ENCODE measurements at regions of chr19 and their contacts with region 1.

Region 1: DNA sequence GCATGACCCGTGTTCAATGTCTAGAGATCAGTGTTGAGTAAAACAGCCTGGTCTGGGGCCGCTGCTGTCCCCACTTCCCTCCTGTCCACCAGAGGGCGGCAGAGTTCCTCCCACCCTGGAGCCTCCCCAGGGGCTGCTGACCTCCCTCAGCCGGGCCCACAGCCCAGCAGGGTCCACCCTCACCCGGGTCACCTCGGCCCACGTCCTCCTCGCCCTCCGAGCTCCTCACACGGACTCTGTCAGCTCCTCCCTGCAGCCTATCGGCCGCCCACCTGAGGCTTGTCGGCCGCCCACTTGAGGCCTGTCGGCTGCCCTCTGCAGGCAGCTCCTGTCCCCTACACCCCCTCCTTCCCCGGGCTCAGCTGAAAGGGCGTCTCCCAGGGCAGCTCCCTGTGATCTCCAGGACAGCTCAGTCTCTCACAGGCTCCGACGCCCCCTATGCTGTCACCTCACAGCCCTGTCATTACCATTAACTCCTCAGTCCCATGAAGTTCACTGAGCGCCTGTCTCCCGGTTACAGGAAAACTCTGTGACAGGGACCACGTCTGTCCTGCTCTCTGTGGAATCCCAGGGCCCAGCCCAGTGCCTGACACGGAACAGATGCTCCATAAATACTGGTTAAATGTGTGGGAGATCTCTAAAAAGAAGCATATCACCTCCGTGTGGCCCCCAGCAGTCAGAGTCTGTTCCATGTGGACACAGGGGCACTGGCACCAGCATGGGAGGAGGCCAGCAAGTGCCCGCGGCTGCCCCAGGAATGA is 1.5 kb upstream of the CEACAM5 start:
- DNase-seq: peak; percentile 76
- ATAC-seq: peak; percentile 96
- H3K4me3 Mint-ChIP-seq: peak overlapping the region; percentile 47
- H3K27ac Mint-ChIP-seq: no peak overlapping the region
- H3K4me1 Mint-ChIP-seq: peaks cover 2% of the 10 kb centered on the region
- H3K27me3 Mint-ChIP-seq: peaks cover 9% of the 10 kb centered on the region

Region 2: GRCh38 chr19:41691268-41691970 is 15.5 kb before region 1 on chr19:
- CTCF ChIA-PET with region 1: interaction called, 23 read pairs
- POLR2A ChIA-PET with region 1: no interaction called
- DNase-seq: peak; percentile 41
- ATAC-seq: peak; percentile 27
- H3K4me3 Mint-ChIP-seq: no peak overlapping the region
- H3K27ac Mint-ChIP-seq: no peak overlapping the region
- H3K4me1 Mint-ChIP-seq: no peaks in the 10 kb centered on the region
- H3K27me3 Mint-ChIP-seq: peaks cover 9% of the 10 kb centered on the region

Region 3: DNA sequence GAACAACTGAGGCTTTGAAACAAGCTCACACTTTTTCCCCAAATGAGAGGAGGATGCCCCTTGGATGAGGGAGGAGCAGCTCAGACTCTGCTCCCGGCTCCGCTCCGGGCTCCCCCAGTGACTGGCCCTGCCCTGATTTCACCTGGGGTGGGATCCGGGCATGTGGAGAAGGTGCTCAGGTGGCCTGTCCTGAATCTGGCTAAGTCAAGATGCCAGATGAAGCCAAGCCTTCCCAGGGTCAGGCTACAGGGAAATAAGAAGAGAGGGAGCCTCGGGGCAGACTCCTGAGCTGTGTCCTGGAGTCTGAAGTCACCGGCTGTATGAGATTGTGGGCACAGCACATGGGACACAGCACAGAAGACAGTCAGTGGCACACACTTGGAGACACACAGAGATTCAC is 11.8 kb after region 1 on chr19:
- CTCF ChIA-PET with region 1: interaction called, 26 read pairs
- POLR2A ChIA-PET with region 1: no interaction called
- DNase-seq: no peak
- ATAC-seq: no peak
- H3K4me3 Mint-ChIP-seq: no peak overlapping the region
- H3K27ac Mint-ChIP-seq: no peak overlapping the region
- H3K4me1 Mint-ChIP-seq: no peaks in the 10 kb centered on the region
- H3K27me3 Mint-ChIP-seq: peaks cover 5% of the 10 kb centered on the region

Region 4: DNA sequence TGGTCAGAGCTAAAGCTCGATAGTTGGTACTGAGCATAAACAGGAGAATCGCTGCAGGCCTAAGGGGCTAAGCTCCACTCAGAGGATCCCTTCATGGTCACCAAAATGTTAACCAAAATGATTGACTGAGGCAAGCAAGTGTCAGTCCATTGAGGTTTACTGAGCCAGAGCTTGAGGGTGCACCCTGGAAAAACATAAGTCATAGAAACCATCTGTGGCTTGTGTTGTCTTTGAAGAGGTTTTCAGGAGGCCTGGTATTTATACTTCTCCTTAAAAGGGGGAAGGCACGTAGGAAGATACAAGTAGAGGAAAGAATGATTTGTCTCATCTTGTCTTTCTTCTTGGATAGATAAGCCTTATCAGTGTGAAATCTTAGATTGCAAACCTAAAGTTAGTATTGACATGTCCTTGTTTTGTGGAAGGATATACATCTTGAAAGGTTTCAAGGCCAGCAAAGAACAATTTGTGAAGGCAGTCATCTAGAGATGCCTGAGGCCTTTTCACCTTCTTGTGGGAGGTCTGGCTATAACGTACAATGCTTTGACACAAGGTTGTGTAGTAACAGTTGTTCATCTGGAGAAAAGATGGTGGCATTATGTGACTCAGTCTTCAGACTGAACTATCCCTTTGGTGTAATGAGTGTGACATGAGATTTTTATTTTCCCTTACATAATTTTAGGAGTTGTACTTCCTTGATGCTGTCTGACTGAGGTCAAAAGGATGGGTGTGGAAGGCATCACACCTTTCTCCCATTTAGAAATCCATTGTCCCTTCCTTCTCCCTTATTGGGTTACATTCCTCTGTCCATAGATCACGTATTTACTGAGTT is 33.7 kb after region 1 on chr19:
- CTCF ChIA-PET with region 1: interaction called, 22 read pairs
- POLR2A ChIA-PET with region 1: no interaction called
- DNase-seq: no peak
- ATAC-seq: peak; percentile 51
- H3K4me3 Mint-ChIP-seq: no peak overlapping the region
- H3K27ac Mint-ChIP-seq: no peak overlapping the region
- H3K4me1 Mint-ChIP-seq: peaks cover 21% of the 10 kb centered on the region
- H3K27me3 Mint-ChIP-seq: peaks cover 43% of the 10 kb centered on the region

Region 5: DNA sequence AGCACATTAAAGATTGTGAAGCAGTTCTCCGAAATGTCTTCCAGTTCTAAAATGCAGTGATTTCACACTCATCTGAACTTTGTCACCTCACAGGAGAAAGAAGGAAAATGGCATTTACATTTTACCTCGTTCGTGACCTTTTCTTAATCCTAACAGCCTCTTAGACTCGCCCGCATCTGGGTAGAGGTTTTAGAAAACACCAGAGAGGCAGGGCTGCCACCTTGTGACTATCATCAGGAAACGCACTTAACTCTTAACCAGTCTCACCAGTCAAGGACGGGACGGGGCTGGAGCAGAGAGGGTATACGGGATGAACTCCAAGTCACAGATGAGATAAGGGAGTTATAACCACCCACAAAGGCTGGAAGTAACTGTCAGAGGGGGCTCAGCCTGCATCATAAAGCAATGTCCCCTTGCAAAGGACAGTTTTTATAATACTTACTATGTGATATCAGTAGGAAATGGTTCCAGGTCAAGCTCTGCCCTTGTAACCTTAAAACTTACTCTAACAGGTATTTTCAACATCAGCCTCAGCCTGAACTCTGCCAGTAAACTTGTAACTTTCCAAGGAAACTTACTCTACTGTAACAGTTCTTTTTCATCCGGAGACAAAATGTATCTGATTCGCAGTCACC is 39.8 kb after region 1 on chr19:
- CTCF ChIA-PET with region 1: interaction called, 22 read pairs
- POLR2A ChIA-PET with region 1: no interaction called
- DNase-seq: peak; percentile 70
- ATAC-seq: peak; percentile 84
- H3K4me3 Mint-ChIP-seq: no peak overlapping the region
- H3K27ac Mint-ChIP-seq: no peak overlapping the region
- H3K4me1 Mint-ChIP-seq: peaks cover 9% of the 10 kb centered on the region
- H3K27me3 Mint-ChIP-seq: peaks cover 47% of the 10 kb centered on the region

Region 6: DNA sequence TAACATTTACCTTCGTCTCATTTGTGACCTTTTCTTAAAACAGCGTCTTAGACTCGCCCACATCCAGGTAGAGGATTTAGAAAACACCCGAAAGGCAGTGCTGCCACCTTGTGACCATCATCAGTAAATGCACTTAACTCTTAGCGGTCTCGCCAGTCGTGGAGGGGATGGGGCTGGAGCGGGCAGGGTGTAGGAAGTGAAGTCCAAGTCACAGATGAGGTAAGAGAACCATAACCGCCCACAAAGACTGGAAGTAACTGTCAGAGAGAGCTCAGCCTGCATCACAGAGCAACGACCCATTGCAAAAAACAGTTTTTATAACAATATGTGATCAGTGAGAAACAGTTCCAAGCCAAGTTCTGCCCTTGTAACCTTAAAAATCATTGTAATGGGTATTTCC is 78.7 kb after region 1 on chr19:
- CTCF ChIA-PET with region 1: interaction called, 21 read pairs
- POLR2A ChIA-PET with region 1: no interaction called
- DNase-seq: peak; percentile 85
- ATAC-seq: peak; percentile 93
- H3K4me3 Mint-ChIP-seq: no peak overlapping the region
- H3K27ac Mint-ChIP-seq: no peak overlapping the region
- H3K4me1 Mint-ChIP-seq: peaks cover 17% of the 10 kb centered on the region
- H3K27me3 Mint-ChIP-seq: peaks cover 31% of the 10 kb centered on the region

Measured in activated CD8-positive, alpha-beta T cell treated with anti-CD3 and anti-CD28 coated beads, Interleukin-2, amount 10 ng/mL, durations not matched to agents 7 days and 5 days (primary cell).